ENCODE measurements at regions of chr1 and their contacts with region 1.

Region 1: DNA sequence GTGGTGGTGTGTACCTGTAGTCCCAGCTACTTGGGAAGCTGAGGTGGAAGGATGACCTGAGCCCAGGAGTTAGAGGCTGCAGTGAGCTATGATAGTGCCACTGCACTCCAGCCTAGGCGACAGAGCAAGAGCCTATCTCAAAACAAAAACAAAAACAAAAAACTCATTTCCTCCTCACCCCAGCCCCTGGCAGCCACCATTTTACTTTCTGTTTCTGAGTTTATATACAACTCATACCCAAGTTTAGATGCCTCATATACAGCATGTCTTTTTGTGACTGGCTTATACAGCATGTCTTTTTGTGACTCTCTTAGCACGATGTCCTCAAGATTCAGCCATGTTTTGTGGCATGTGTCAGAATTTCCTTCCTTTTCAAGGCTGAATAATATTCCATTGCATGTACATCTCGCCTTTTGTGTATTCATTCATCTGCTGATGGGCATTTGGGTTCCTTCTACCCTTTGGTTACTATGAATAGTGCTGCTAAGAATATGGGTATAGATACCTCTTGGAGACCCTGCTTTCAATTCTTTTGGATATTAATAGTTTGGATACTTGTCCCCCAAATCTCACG is 14.7 kb downstream of the COA7 start:
- DNase-seq: no peak
- ATAC-seq: no peak
- H3K4me3 ChIP-seq: no peak overlapping the region
- H3K27ac ChIP-seq: no peak overlapping the region
- H3K4me1 ChIP-seq: no peaks in the 10 kb centered on the region
- H3K27me3 ChIP-seq: no peaks in the 10 kb centered on the region
- CTCF ChIP-seq: no peak
- EP300 ChIP-seq: no peak
- POLR2A ChIP-seq: no peak
- RAD21 ChIP-seq: no peak

Region 2: DNA sequence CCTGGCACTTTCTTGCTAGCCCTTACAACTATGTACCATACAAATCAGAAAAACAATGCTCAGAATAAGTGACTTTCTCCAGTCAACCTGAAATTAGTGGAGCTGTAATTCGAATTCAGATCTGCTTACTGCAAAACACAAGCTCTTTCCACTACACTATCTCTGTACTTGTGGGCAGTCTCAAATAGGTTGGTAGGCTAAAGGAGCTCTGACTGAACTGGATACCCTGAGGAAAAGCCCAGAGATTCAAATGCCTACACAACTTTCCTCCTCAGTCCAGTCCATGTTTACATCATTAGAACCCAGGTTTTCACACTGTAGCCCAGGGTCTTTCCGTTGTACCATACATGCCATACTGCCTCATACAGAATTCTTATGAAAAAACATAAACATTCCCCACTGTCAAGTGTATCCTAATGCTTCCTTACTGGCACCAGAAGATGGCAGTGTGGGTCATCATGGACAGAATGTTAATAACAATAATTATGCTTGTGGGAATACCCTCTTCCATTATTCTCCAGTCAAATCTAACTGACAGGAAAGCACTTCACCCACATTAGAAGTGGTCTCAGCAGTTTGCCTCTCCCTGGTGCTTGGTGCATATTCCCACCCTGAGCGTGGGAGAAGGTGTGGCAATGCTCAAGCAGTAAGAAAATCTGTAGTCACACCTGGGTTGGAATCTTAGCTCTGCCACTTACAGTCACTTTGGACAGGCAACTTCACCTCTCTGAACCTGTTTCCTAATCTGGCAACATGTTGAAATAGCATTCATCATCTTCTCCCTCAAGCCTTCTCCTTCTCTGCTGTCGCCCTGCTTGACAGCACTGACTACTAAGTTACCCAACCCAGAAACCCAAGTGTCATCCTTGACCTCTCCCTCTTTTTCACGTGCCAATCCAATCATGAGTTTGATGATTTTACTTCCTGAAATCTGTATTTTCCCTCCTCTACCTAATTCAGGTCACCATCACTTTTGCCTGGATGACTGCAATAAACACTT is 556.0 kb before region 1 on chr1:
- CTCF ChIA-PET with region 1: no interaction called
- POLR2A ChIA-PET with region 1: no interaction called
- RAD21 ChIA-PET with region 1: no interaction called
- SMC1A ChIA-PET with region 1: interaction called, 3 read pairs
- in situ Hi-C with region 1: no loop called
- intact Hi-C with region 1: loop called (anchors 5 kb)
- DNase-seq: no peak
- ATAC-seq: peak; percentile 82
- H3K4me3 ChIP-seq: no peak overlapping the region
- H3K27ac ChIP-seq: no peak overlapping the region
- H3K4me1 ChIP-seq: no peaks in the 10 kb centered on the region
- H3K27me3 ChIP-seq: no peaks in the 10 kb centered on the region
- CTCF ChIP-seq: peak; percentile 59 to 74 (median 66); a peak in 5 of 6 replicates
- EP300 ChIP-seq: no peak
- POLR2A ChIP-seq: no peak
- RAD21 ChIP-seq: peak; percentile 83

Region 3: GRCh38 chr1:52141513-52142219 is 541.8 kb before region 1 on chr1 and contains the start of gene ZFYVE9:
- CTCF ChIA-PET with region 1: interaction called, 3 read pairs
- POLR2A ChIA-PET with region 1: no interaction called
- RAD21 ChIA-PET with region 1: no interaction called
- SMC1A ChIA-PET with region 1: no interaction called
- in situ Hi-C with region 1: loop called (anchors 10 kb)
- intact Hi-C with region 1: no loop called
- DNase-seq: no peak
- ATAC-seq: peak; percentile 89
- H3K4me3 ChIP-seq: peak within 1 kb of the TSS; percentile 79
- H3K27ac ChIP-seq: peak within 1 kb of the TSS; percentile 21
- H3K4me1 ChIP-seq: peaks cover 11% of the 10 kb centered on the region; the same call in 1 of the 2 replicates
- H3K27me3 ChIP-seq: no peaks in the 10 kb centered on the region; a peak in 1 of 4 replicates
- CTCF ChIP-seq: peak; percentile 62 to 84 (median 64); a peak in 5 of 6 replicates
- EP300 ChIP-seq: no peak
- POLR2A ChIP-seq: no peak; the same call in 1 of the 2 replicates
- RAD21 ChIP-seq: peak; percentile 60
- polyA plus RNA-seq, gene ZFYVE9: 0.26 to 0.47 TPM

Region 4: DNA sequence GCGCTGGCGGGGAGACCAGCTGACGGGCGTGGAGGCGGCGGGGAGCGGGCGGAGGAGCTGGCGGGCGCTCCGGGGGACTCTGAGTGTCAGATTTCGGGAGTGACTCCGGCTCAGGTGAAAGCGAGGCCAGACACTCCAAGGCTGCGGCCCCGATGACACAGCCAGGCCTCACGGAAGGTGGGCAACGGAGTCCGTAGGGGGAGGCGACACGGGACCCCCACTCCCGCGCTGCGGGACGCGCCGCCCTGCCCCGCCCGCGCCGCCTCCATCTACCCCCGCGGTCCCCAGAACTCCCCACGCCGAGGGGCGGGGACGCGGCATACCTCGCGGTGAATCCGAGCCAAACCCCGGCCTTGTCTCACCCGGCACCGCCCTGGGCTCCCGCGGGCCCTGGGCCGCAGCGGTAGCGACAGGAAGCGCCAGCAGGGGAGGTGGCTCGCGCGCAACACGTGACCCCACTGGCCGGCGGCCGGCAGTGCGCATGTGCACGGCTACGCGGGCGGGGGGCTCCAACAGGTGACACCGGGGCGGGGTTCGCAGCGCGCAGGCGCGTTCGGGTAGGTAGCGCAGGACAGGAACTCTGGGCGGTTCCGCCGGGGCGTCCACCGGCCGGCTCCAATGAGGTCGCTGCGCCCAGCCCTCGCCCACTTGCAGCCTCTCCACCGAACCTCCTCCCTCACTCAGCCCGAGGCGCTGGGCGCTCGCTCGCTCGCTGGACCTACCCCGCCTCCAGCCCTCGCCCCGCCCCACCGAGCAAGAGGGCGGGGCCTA is 317.5 kb before region 1 on chr1 and contains the start of gene CC2D1B:
- CTCF ChIA-PET with region 1: interaction called, 5 read pairs
- POLR2A ChIA-PET with region 1: no interaction called
- RAD21 ChIA-PET with region 1: interaction called, 4 read pairs
- SMC1A ChIA-PET with region 1: no interaction called
- in situ Hi-C with region 1: no loop called
- intact Hi-C with region 1: loop called (anchors 10 kb)
- DNase-seq: peak; percentile 94
- ATAC-seq: peak; percentile 97
- H3K4me3 ChIP-seq: peak within 1 kb of the TSS; percentile 88
- H3K27ac ChIP-seq: peak within 1 kb of the TSS; percentile 84
- H3K4me1 ChIP-seq: peaks cover 4% of the 10 kb centered on the region
- H3K27me3 ChIP-seq: no peaks in the 10 kb centered on the region
- CTCF ChIP-seq: no peak; a peak in 1 of 6 replicates
- EP300 ChIP-seq: no peak
- POLR2A ChIP-seq: peak; percentile 99
- RAD21 ChIP-seq: no peak
- polyA plus RNA-seq, gene CC2D1B: 0.90 to 2.2 TPM

Region 5: GRCh38 chr1:52404116-52404986 is 279.1 kb before region 1 on chr1 and contains the starts of genes ORC1 and PRPF38A:
- CTCF ChIA-PET with region 1: interaction called, 31 read pairs
- POLR2A ChIA-PET with region 1: interaction called, 3 read pairs
- RAD21 ChIA-PET with region 1: interaction called, 16 read pairs
- SMC1A ChIA-PET with region 1: interaction called, 10 read pairs
- in situ Hi-C with region 1: loop called (anchors 5 kb)
- intact Hi-C with region 1: loop called (anchors 5 kb)
- DNase-seq: peak; percentile 83
- ATAC-seq: peak; percentile 91
- H3K4me3 ChIP-seq: peak within 1 kb of the TSS; percentile 98
- H3K27ac ChIP-seq: peak within 1 kb of the TSS; percentile 98
- H3K4me1 ChIP-seq: no peaks in the 10 kb centered on the region
- H3K27me3 ChIP-seq: no peaks in the 10 kb centered on the region
- CTCF ChIP-seq: peak; percentile 50 to 57 (median 52)
- EP300 ChIP-seq: no peak
- POLR2A ChIP-seq: peak; percentile 88
- RAD21 ChIP-seq: peak; percentile 31; the same call in 1 of the 2 replicates
- polyA plus RNA-seq, gene ORC1: 7.7 to 10.3 TPM
- polyA plus RNA-seq, gene PRPF38A: 86.8 to 104 TPM

Region 6: GRCh38 chr1:52552505-52553361 is 130.7 kb before region 1 on chr1 and contains the start of gene TUT4:
- CTCF ChIA-PET with region 1: interaction called, 3 read pairs
- POLR2A ChIA-PET with region 1: no interaction called
- RAD21 ChIA-PET with region 1: interaction called, 3 read pairs
- SMC1A ChIA-PET with region 1: interaction called, 3 read pairs
- in situ Hi-C with region 1: no loop called
- intact Hi-C with region 1: loop called (anchors 10 kb)
- DNase-seq: no peak
- ATAC-seq: peak; percentile 78
- H3K4me3 ChIP-seq: peak within 1 kb of the TSS; percentile 81
- H3K27ac ChIP-seq: peak within 1 kb of the TSS; percentile 86
- H3K4me1 ChIP-seq: peaks cover 4% of the 10 kb centered on the region
- H3K27me3 ChIP-seq: 0 out of 4 replicates have a peak, but pooled peaks cover 0 to 6% of the 10 kb centered on the region in 2 experiments
- CTCF ChIP-seq: peak in 1 of 3 experiments; percentile 8; a peak in 2 of 6 replicates
- EP300 ChIP-seq: no peak
- POLR2A ChIP-seq: peak; percentile 82
- RAD21 ChIP-seq: peak; percentile 30; the same call in 1 of the 2 replicates
- polyA plus RNA-seq, gene TUT4: 9.4 to 11.5 TPM

Region 7: DNA sequence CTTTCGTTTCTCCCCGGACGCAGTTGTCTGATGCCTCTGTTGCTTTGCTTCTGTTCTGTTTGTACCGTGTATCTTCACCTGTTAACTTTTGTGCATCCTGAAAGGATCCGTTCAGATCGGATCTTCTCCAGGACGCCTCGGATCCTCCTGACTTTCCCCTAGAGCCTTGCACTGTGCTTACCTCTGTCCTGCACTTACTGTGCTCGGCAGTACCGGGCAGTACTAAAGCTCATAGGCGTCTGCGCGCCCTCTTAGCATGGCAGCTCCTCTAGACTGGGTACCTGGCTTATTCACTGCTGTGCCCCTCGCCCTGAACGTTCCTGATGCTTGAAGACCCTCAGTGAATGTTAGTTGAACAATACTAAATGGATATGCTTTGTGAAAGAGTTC is 244.6 kb after region 1 on chr1:
- CTCF ChIA-PET with region 1: no interaction called
- POLR2A ChIA-PET with region 1: no interaction called
- RAD21 ChIA-PET with region 1: no interaction called
- SMC1A ChIA-PET with region 1: no interaction called
- in situ Hi-C with region 1: no loop called
- intact Hi-C with region 1: no loop called
- DNase-seq: no peak
- ATAC-seq: peak; percentile 10
- H3K4me3 ChIP-seq: peak overlapping the region; percentile 79
- H3K27ac ChIP-seq: no peak overlapping the region
- H3K4me1 ChIP-seq: no peaks in the 10 kb centered on the region; the same call in 1 of the 2 replicates
- H3K27me3 ChIP-seq: no peaks in the 10 kb centered on the region
- CTCF ChIP-seq: no peak
- EP300 ChIP-seq: no peak
- POLR2A ChIP-seq: no peak
- RAD21 ChIP-seq: no peak

Measured in GM12878 (cell line).